Esophagus muscularis mucosa (tissue), 4 donors: ENCODE measurements at regions of chr17 and their contacts with region 1.

Region 1: DNA sequence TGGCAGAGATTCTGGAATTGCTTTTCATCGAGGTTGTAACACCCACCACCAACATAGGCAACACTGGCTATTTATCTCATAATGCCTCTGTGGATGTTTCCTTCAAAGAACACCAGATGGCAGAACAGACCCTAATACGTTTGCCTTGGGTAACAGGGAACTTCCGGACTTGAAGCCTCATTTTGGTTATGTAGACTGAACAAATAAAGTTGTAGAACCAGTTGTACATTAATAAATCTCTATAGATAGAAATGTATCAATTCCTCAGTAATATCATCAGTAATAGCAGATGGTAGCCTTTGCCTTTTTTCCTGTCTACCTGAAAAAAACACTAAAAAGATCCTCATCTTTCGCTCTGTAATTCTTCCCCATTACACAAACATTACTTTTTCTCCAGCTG is 25.9 kb upstream of the APOH start:
- DNase-seq: no peak
- H3K4me3 ChIP-seq: no peak overlapping the region
- H3K27ac ChIP-seq: no peak overlapping the region
- H3K4me1 ChIP-seq: peaks cover 0 to 4% (median 1%) of the 10 kb centered on the region in 4 donors
- H3K27me3 ChIP-seq: no peaks in the 10 kb centered on the region
- CTCF ChIP-seq: peak; percentile 73 to 87 (median 76)
- EP300 ChIP-seq: no peak
- POLR2A ChIP-seq: no peak

Region 2: DNA sequence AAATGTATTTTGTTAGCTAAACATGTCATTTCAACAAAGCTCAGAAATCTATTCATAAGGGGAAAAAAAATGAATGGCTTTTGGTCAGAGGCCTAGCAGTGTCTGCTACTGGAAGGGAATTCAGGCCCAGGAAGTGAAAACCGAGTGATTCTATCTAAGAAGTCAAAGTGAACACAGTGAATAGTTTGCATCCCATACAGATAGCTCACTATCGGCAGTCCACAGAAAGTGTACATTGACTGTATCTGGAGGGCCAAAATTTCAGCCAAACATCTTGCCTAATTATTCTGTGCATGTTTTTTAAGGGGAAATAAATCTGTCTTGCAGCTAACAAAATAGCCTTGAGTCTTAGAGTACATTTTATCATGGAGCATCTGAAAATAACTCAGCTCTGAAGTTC is 365.4 kb after region 1 on chr17:
- intact Hi-C with region 1: loop called (anchors 5 kb)
- DNase-seq: no peak
- H3K4me3 ChIP-seq: no peak overlapping the region
- H3K27ac ChIP-seq: no peak overlapping the region
- H3K4me1 ChIP-seq: no peaks in the 10 kb centered on the region
- H3K27me3 ChIP-seq: no peaks in the 10 kb centered on the region
- CTCF ChIP-seq: no peak
- EP300 ChIP-seq: no peak
- POLR2A ChIP-seq: no peak

Region 3: GRCh38 chr17:66673668-66674315 is 418.7 kb after region 1 on chr17:
- intact Hi-C with region 1: loop called (anchors 2 kb)
- DNase-seq: no peak
- H3K4me3 ChIP-seq: no peak overlapping the region
- H3K27ac ChIP-seq: peak overlapping the region; percentile 0 to 60 (median 36)
- H3K4me1 ChIP-seq: peaks cover 0 to 30% (median 27%) of the 10 kb centered on the region in 4 donors
- H3K27me3 ChIP-seq: no peaks in the 10 kb centered on the region
- CTCF ChIP-seq: peak; percentile 75 to 86 (median 82)
- EP300 ChIP-seq: no peak
- POLR2A ChIP-seq: no peak